Aorta (tissue), 5 donors: ENCODE measurements at regions of chr3 and their contacts with region 1.

Region 1: DNA sequence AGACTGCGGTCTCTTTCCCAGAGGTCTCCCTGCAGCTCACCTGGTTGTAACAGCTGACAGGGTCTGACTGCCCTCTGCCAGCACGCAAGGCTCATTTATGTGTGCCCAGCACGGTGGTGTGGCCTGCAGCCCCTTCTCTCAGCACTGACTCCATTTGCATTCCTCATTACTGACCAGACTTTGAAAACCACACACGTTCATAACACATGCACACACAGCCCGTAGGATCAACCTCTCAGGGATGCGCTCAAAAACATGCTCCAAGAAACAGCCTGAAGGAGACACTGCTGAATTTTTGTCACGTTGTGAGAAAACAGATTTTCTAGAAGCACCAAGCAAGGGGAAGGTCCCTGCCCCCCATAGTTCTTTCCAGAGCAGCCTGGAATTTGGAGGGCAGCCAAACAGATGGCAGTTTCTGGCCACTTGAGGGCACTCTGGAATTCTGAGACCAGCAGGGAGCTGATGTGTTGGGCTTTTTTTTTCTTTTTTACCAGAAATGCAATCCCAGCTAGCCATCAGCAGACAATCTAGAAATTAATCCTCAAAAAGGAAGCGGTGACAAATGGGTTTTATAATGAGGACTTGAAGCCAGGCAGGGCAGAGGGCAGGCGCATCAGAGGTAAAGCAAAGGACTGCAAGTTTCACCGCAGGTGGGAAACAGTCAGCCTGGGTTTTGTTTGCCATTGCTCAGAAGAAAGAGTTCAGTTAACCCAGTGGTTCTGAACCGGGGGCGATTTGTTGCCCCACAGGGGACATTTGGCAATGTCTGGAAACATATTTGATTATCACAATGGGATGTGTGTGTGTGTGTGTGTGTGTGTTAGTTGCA is 170.5 kb upstream of the PROK2 start:
- DNase-seq: peak; percentile 82 to 87
- ATAC-seq: peak; percentile 87
- H3K4me3 ChIP-seq: no peak overlapping the region
- H3K27ac ChIP-seq: no peak overlapping the region
- H3K4me1 ChIP-seq: no peaks in the 10 kb centered on the region
- H3K27me3 ChIP-seq: no peaks in the 10 kb centered on the region

Region 2: GRCh38 chr3:72270072-72270681 is 314.7 kb after region 1 on chr3:
- intact Hi-C with region 1: loop called in 1 of 2 experiments (anchors 5 kb)
- DNase-seq: peak; percentile 92 to 94
- ATAC-seq: peak; percentile 93
- H3K4me3 ChIP-seq: no peak overlapping the region
- H3K27ac ChIP-seq: no peak overlapping the region
- H3K4me1 ChIP-seq: no peaks in the 10 kb centered on the region
- H3K27me3 ChIP-seq: no peaks in the 10 kb centered on the region